Heart left ventricle (tissue), 16 donors: ENCODE measurements at regions of chr9 and their contacts with region 1.

Region 1: GRCh38 chr9:16705121-16705604 is 165.3 kb downstream of the BNC2 start:
- DNase-seq: peak; percentile 76 to 92 (median 86)
- ATAC-seq: peak; percentile 93 to 98 (median 96)
- H3K4me3 ChIP-seq: peak overlapping the region in 7 of 12 donors; percentile 32 to 55 (median 48)
- H3K27ac ChIP-seq: peak overlapping the region; percentile 75 to 92 (median 86)
- H3K4me1 ChIP-seq: peaks cover 0 to 38% (median 6%) of the 10 kb centered on the region in 12 donors
- H3K27me3 ChIP-seq: peaks cover 0 to 10% (median 0%) of the 10 kb centered on the region in 9 donors
- CTCF ChIP-seq: no peak
- POLR2A ChIP-seq: no peak

Region 2: DNA sequence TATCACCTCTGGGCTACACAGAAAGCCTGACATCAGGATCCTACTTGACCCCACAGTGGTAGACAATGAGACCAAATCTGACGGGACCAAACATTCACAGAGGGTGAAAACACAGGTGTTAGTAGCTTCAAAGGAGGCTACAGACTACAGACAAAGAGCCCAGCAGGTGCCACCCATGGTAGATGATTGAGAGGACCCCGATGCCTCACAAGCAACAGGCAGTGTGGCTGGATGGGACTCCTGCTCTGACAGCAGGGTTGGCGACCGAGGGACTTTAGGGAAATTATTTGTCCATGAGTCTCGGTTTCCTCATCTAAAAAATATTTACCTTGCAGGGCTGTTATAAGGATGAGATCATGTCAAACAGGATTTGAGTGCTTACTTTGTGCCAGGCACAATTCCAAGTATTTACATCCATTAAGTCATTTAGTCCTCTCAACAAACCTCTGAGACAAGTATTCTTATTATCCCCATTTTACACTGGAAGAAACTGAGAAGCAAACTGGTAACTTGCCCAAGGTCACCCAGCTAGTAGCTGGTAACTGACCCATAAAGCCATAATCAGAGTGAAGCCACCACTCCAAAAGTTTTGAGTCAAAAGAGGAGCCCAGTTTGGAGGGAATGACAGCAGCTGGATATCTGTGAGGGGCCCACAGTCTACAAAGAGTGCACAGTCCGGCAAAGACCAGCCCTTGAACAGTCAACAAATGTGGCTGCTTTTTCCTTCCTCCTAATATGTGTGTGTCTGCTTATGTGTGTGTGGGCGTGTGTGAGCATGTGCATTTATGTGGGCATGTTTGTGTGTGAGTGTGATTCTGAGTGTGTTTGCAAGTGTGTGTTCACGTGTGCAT is 336.7 kb before region 1 on chr9:
- intact Hi-C with region 1: loop called in 1 of 10 experiments (anchors 10 kb)
- DNase-seq: no peak
- ATAC-seq: no peak
- H3K4me3 ChIP-seq: no peak overlapping the region
- H3K27ac ChIP-seq: no peak overlapping the region
- H3K4me1 ChIP-seq: peaks cover 0 to 13% (median under 1%) of the 10 kb centered on the region in 12 donors
- H3K27me3 ChIP-seq: no peaks in the 10 kb centered on the region
- CTCF ChIP-seq: no peak
- POLR2A ChIP-seq: no peak